ENCODE measurements at regions of chr19 and their contacts with region 1.

Region 1: DNA sequence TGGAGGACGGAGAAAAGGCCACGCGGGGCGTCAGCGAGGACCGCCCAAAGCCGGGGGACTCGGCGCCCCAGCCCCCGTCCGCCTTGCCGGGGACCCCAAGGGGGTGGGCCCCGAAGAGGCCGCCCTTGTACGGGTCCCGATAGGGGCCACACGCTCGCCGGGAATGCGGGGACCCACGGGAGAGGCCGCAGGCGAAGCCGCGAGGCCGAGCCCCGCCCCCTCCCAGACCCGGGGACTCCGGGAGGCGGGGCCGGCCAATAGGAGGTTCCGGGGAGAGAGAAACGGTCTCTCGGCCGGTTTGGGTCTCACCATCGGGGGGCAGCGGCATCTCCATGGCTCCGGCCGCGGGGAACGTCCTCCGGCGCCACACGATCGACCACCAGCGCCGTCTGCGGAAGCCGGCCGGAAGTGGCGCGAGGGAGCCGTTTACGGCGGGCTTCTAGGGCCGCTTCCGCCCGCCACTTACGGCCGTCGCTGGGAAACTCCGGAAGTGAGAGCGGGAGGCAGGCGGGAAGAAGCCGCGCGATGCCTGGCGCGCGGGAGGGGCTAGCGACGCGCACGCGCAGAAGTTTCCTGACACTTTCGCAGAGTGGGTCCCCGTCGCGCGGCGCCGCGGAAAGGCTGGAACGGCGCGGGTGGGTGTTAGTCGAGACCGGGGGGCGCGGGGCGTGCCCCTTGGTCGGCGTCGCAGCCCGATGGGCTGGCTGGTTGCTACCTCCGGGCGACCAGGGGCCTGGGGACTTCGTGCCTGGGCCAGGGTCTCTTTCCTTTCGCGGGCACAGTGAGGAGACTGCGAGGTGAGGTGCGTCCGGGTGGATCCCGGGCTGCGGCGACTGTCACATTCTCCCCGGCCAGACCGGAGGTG is at the start of gene CHERP:
- DNase-seq: peak; percentile 60 to 94
- H3K4me3 ChIP-seq: peak within 1 kb of the TSS; percentile 65 to 76
- H3K27ac ChIP-seq: peak within 1 kb of the TSS; percentile 80 to 84
- H3K4me1 ChIP-seq: peaks cover 9 to 26% of the 10 kb centered on the region in 2 donors
- H3K27me3 ChIP-seq: no peaks in the 10 kb centered on the region
- CTCF ChIP-seq: no peak
- total RNA-seq, gene CHERP: 13.8 TPM

Region 2: DNA sequence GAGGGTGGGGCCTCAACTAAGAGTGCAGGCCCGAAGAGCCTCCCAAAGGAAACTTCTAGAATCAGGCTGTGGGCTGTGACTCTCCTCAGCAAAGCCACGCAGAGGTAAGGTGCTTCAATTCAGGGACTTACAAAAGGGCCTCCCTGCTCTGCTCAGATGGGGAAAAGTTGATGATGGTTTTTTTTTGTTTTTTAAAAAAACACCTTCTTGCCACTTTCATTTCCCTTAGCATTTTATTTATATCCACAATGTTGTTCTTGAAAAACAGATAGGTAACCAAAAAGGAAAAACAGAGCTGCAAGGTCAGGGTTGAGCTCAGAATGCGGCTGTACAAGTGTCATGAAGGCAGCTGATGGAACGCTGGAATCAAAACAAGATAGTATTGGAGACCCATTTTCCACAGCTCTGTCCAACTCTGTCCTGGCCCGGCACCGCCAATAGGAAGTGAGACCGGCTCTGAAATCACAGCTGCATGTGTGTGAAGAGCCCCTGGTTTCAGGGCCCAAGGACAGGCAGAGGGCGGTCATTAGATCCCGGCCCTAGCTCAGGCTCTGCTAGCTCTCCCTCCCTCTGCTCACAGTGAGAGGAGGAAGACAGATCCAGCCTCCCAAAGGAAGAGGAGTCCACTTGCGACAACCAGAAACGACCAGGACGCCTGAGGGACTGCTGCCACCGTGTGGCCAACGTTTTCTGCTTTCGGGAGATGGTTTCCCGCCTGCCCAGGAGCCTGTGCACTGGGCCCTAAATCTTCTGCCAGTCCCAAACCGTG is 159.3 kb before region 1 on chr19:
- intact Hi-C with region 1: no loop called
- DNase-seq: peak; percentile 46 to 92
- H3K4me3 ChIP-seq: peak overlapping the region; percentile 27 to 38
- H3K27ac ChIP-seq: peak overlapping the region; percentile 97
- H3K4me1 ChIP-seq: peaks cover 21 to 27% of the 10 kb centered on the region in 2 donors
- H3K27me3 ChIP-seq: no peaks in the 10 kb centered on the region
- CTCF ChIP-seq: peak; percentile 82 to 88 (median 86)

Region 3: DNA sequence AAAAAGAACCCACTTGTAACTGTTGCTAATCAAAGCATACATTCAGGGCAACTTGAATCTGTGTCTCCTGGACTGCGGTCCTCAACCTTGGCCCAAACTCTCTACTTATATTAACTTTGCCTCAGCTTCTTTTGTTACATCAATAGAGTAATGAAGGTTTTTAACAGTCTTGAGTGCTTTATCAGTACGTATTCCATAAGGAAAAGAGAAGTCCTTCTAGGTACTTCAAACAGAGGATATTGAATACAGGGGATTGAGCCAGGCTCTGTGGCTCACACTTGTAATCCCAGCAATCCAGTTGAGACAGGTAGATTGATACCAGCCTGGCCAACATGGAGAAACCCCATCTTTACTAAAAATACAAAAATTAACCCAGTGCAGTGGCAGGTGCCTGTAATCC is 69.3 kb before region 1 on chr19:
- intact Hi-C with region 1: loop called (anchors 1 kb)
- DNase-seq: no peak
- H3K4me3 ChIP-seq: no peak overlapping the region
- H3K27ac ChIP-seq: no peak overlapping the region
- H3K4me1 ChIP-seq: peaks cover 3 to 12% of the 10 kb centered on the region in 2 donors
- H3K27me3 ChIP-seq: no peaks in the 10 kb centered on the region
- CTCF ChIP-seq: no peak

Region 4: GRCh38 chr19:16495982-16496612 is 46.2 kb before region 1 on chr19 and contains the starts of genes C19orf44 and CALR3:
- intact Hi-C with region 1: loop called (anchors 1 kb)
- DNase-seq: peak; percentile 97 to 100
- H3K4me3 ChIP-seq: peak within 1 kb of the TSS; percentile 72 to 82
- H3K27ac ChIP-seq: peak within 1 kb of the TSS; percentile 64 to 69
- H3K4me1 ChIP-seq: peaks cover 0 to 7% of the 10 kb centered on the region in 2 donors
- H3K27me3 ChIP-seq: no peaks in the 10 kb centered on the region
- CTCF ChIP-seq: peak in 1 of 3 experiments; percentile 22
- total RNA-seq, gene C19orf44: 5.1 TPM
- total RNA-seq, gene CALR3: not detected

Region 5: GRCh38 chr19:16572332-16573211 is 30.3 kb after region 1 on chr19 and contains the start of gene SLC35E1:
- intact Hi-C with region 1: loop called (anchors 2 kb)
- DNase-seq: peak; percentile 86 to 97
- H3K4me3 ChIP-seq: peak within 1 kb of the TSS; percentile 90 to 95
- H3K27ac ChIP-seq: peak within 1 kb of the TSS; percentile 73 to 86
- H3K4me1 ChIP-seq: peaks cover 14 to 23% of the 10 kb centered on the region in 2 donors
- H3K27me3 ChIP-seq: no peaks in the 10 kb centered on the region
- CTCF ChIP-seq: no peak
- total RNA-seq, gene SLC35E1: 56.3 TPM

Region 6: GRCh38 chr19:16628183-16628983 is 86.1 kb after region 1 on chr19 and contains the start of gene MED26:
- intact Hi-C with region 1: loop called (anchors 1 kb)
- DNase-seq: peak; percentile 66 to 94
- H3K4me3 ChIP-seq: peak within 1 kb of the TSS; percentile 95 to 97
- H3K27ac ChIP-seq: peak within 1 kb of the TSS; percentile 81 to 93
- H3K4me1 ChIP-seq: peaks cover 7 to 17% of the 10 kb centered on the region in 2 donors
- H3K27me3 ChIP-seq: no peaks in the 10 kb centered on the region
- CTCF ChIP-seq: no peak
- total RNA-seq, gene MED26: 3.5 TPM

Region 7: GRCh38 chr19:16659831-16660708 is 117.8 kb after region 1 on chr19 and contains the start of gene SMIM7:
- intact Hi-C with region 1: loop called (anchors 1 kb)
- DNase-seq: peak; percentile 93 to 99
- H3K4me3 ChIP-seq: peak within 1 kb of the TSS; percentile 81 to 93
- H3K27ac ChIP-seq: peak within 1 kb of the TSS; percentile 87
- H3K4me1 ChIP-seq: peaks cover 9 to 20% of the 10 kb centered on the region in 2 donors
- H3K27me3 ChIP-seq: no peaks in the 10 kb centered on the region
- CTCF ChIP-seq: no peak
- total RNA-seq, gene SMIM7: 16.7 TPM